ENCODE measurements at regions of chr22 and their contacts with region 1.

Region 1: DNA sequence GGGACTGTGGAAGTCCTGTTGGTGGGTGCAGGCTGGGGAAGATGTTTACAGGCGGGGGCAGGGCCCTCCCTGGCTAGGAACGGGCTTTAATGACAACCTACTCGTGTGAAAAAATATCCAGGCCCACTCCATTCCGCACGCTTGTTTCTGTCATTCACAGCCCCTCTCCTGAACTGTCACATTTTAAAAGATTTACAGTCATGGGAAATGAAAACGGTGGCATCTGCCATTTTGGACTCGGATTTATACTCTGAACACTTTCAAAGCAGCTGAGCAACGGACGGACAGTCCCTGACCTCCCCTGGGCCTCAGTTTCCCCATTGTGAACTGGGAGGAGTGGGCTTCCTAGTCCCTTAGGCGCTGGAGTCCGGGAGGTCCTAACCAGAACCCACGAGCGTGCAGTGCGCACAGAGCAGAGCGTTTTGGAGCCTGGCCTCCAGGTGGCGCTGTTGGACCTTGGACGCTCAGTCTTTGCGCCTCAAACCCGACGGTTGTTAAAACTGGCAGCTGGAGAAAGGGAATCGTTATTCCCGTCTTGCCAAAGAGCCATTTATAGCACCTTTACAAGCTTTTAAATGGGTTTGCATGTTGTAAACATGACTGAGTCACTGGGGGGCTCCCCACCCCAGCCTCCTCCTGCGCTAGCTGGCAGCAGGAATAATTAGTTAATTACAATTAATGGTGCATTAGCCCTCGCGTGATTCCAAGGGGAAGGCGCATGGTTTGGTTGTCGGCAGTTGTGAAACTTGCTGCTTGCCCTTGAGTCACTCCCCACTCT is 75.3 kb downstream of the FBLN1 start:
- DNase-seq: peak; percentile 91
- H3K4me3 Mint-ChIP-seq: peak overlapping the region; percentile 21
- H3K27ac Mint-ChIP-seq: peak overlapping the region; percentile 69
- H3K4me1 Mint-ChIP-seq: peaks cover 18% of the 10 kb centered on the region
- H3K27me3 Mint-ChIP-seq: no peaks in the 10 kb centered on the region
- CTCF ChIP-seq: peak; percentile 96

Region 2: GRCh38 chr22:45381348-45381747 is 196.6 kb before region 1 on chr22:
- CTCF ChIA-PET with region 1: no interaction called
- intact Hi-C with region 1: no loop called
- DNase-seq: no peak
- H3K4me3 Mint-ChIP-seq: no peak overlapping the region
- H3K27ac Mint-ChIP-seq: no peak overlapping the region
- H3K4me1 Mint-ChIP-seq: no peaks in the 10 kb centered on the region
- H3K27me3 Mint-ChIP-seq: peaks cover 2% of the 10 kb centered on the region
- CTCF ChIP-seq: no peak

Region 3: DNA sequence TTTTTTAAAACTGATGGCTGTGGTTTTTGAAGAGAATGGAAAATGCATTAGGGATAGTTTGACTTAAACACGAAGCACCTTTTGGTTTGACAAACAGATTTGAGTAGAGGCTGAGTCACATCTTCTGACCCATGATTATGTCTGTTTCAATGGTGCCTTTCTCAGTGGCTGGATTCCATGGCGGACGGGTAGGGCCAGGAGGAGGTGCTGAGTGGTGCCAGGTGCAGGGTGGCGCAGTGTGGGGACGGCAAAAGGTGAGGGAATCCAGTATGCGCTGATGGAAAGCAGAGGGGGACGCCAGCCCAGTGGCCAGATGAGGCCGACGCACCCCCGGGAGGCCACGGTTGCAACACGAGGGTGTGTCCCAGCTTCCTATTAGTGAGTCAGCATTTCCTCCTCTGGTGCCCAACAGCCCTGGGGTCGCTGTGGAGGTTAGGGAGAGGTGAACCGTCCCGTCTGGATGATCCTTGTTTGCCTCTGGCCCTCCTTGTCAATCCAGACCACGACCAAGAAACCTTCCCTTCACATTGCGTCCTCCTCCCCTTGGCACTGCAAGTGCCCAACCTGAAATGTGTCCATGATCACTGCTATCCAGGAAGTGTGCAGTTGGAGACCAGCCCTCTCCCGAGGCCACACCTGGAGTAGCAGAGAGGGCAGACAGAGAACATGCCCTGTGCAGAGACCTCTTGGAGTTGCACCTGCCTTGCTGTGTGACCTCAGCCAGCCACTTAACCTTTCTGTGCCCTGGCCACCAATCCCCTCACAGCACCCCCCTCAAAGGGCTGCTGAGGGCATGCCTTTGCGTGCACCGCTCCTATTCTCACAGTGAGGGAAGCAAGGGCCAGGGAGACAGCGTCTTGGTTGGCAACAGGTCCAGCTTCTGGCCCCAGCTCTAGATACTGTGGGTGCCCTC is 61.2 kb after region 1 on chr22:
- CTCF ChIA-PET with region 1: interaction called, 3 read pairs
- intact Hi-C with region 1: loop called (anchors 2 kb)
- DNase-seq: peak; percentile 94
- H3K4me3 Mint-ChIP-seq: peak overlapping the region; percentile 50
- H3K27ac Mint-ChIP-seq: peak overlapping the region; percentile 100
- H3K4me1 Mint-ChIP-seq: peaks cover 40% of the 10 kb centered on the region
- H3K27me3 Mint-ChIP-seq: no peaks in the 10 kb centered on the region
- CTCF ChIP-seq: no peak

Region 4: DNA sequence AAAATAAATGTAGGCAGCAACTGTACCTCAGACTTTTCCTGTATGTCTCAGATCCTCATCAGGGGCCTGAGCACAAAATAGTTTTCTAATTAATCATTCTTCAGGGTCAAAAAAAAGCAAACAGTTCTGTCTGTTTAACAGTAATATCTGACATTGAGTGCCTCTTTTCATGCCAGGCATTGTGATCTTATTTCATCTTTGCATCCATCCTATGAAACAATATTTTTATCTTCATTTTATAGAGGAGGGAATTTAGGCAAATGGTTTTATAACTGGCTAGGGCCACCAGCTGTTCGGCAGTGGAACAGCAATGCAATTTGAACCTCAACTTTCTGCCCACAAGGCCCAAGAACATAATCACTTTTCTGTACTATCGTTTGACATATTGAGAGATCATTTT is 253.5 kb after region 1 on chr22:
- CTCF ChIA-PET with region 1: no interaction called
- intact Hi-C with region 1: loop called (anchors 2 kb)
- DNase-seq: peak; percentile 14
- H3K4me3 Mint-ChIP-seq: no peak overlapping the region
- H3K27ac Mint-ChIP-seq: no peak overlapping the region
- H3K4me1 Mint-ChIP-seq: peaks cover 22% of the 10 kb centered on the region
- H3K27me3 Mint-ChIP-seq: no peaks in the 10 kb centered on the region
- CTCF ChIP-seq: peak; percentile 61

Region 5: GRCh38 chr22:45977003-45977411 is 399.1 kb after region 1 on chr22 and contains the start of gene WNT7B:
- CTCF ChIA-PET with region 1: no interaction called
- intact Hi-C with region 1: loop called (anchors 1 kb)
- DNase-seq: peak; percentile 84
- H3K4me3 Mint-ChIP-seq: no peak within 1 kb of the TSS
- H3K27ac Mint-ChIP-seq: no peak within 1 kb of the TSS
- H3K4me1 Mint-ChIP-seq: peaks cover 22% of the 10 kb centered on the region
- H3K27me3 Mint-ChIP-seq: no peaks in the 10 kb centered on the region
- CTCF ChIP-seq: no peak
- total RNA-seq, gene WNT7B: 97.0 and 100.0 TPM in 2 replicates